Sigmoid colon (tissue), 7 donors: ENCODE measurements at regions of chr2 and their contacts with region 1.

Region 1: DNA sequence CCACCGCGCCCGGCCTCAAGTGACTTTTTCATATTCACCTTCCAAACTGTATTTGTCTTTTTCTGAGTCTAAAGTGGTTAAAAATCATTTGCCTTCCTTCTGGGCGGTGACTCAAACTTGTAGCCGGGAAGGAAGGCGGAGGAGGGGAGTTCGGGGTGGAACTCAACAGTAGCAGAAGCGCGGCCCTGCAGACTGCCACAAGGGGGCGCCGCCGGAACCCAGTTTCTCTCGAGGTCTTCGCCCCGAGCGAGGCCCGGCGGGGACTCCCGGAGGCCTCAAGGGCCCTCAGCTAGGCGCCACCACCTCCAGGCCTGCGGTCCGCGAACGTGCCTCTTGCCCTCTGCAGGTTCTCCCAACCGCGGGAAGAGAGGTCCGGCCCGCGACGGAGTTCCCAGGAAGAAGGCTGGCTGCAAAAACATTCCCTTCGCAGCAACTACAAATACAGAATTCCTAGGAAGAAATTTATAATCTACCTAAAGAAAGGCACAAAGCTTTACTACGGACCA is 16.8 kb upstream of the ITM2C start:
- DNase-seq: peak; percentile 92
- H3K4me3 ChIP-seq: no peak overlapping the region
- H3K27ac ChIP-seq: no peak overlapping the region
- H3K4me1 ChIP-seq: peaks cover 0 to 9% (median 4%) of the 10 kb centered on the region in 4 donors
- H3K27me3 ChIP-seq: no peaks in the 10 kb centered on the region
- CTCF ChIP-seq: peak; percentile 75 to 94 (median 91)
- EP300 ChIP-seq: no peak
- POLR2A ChIP-seq: no peak

Region 2: GRCh38 chr2:230505162-230505561 is 342.8 kb before region 1 on chr2:
- intact Hi-C with region 1: no loop called
- DNase-seq: no peak
- H3K4me3 ChIP-seq: no peak overlapping the region
- H3K27ac ChIP-seq: no peak overlapping the region
- H3K4me1 ChIP-seq: no peaks in the 10 kb centered on the region
- H3K27me3 ChIP-seq: no peaks in the 10 kb centered on the region
- CTCF ChIP-seq: no peak
- EP300 ChIP-seq: no peak
- POLR2A ChIP-seq: no peak

Region 3: GRCh38 chr2:230784795-230785194 is 63.1 kb before region 1 on chr2:
- intact Hi-C with region 1: no loop called
- DNase-seq: no peak
- H3K4me3 ChIP-seq: no peak overlapping the region
- H3K27ac ChIP-seq: peak overlapping the region in 3 of 4 donors; percentile 49 to 50 (median 50)
- H3K4me1 ChIP-seq: peaks cover 0 to 28% (median 15%) of the 10 kb centered on the region in 4 donors
- H3K27me3 ChIP-seq: no peaks in the 10 kb centered on the region
- CTCF ChIP-seq: no peak
- EP300 ChIP-seq: no peak
- POLR2A ChIP-seq: no peak

Region 4: DNA sequence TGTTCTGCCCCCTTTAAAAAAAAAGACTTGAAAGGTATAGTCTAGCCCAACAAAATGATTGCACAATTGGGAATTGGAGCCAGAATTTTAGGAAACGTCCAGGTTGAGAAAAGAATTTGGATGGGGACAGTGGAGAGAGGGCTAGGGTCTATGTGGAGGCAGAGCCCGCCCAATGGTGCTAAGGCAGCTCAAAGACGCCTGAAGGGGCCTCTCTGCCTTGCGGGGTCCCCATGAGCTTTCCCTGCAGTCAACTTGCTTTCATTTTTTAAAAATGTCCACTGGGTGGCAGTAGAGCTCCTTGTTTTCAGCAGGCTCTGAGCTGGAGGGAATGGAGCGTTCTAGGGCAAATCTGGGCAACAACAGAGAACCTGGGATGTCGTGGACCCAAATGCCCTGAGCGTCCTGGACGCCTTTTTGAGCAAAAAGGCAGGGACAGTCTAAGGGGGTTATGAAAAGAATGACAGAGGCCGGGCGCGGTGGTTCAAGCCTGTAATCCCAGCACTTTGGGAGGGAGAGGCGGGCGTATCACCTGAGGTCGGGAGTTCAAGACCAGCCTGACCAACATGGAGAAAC is 23.4 kb before region 1 on chr2:
- intact Hi-C with region 1: loop called (anchors 2 kb)
- DNase-seq: no peak
- H3K4me3 ChIP-seq: peak overlapping the region in 3 of 4 donors; percentile 14 to 34 (median 20)
- H3K27ac ChIP-seq: no peak overlapping the region
- H3K4me1 ChIP-seq: peaks cover 0 to 17% (median 12%) of the 10 kb centered on the region in 4 donors
- H3K27me3 ChIP-seq: peaks cover 5 to 35% (median 25%) of the 10 kb centered on the region in 3 donors
- CTCF ChIP-seq: peak in 3 of 4 experiments; percentile 64 to 73 (median 68)
- EP300 ChIP-seq: no peak
- POLR2A ChIP-seq: no peak

Region 5: GRCh38 chr2:230864598-230865306 is 16.8 kb after region 1 on chr2 and contains the start of gene ITM2C:
- intact Hi-C with region 1: loop called (anchors 2 kb)
- DNase-seq: peak; percentile 84
- H3K4me3 ChIP-seq: peak within 1 kb of the TSS; percentile 66 to 84 (median 78)
- H3K27ac ChIP-seq: peak within 1 kb of the TSS; percentile 71 to 88 (median 82)
- H3K4me1 ChIP-seq: peaks cover 0 to 51% (median 47%) of the 10 kb centered on the region in 4 donors
- H3K27me3 ChIP-seq: no peaks in the 10 kb centered on the region
- CTCF ChIP-seq: peak in 1 of 4 experiments; percentile 35
- EP300 ChIP-seq: no peak
- POLR2A ChIP-seq: peak; percentile 61 to 67
- total RNA-seq, gene ITM2C: 107 to 206 (median 117) TPM

Region 6: DNA sequence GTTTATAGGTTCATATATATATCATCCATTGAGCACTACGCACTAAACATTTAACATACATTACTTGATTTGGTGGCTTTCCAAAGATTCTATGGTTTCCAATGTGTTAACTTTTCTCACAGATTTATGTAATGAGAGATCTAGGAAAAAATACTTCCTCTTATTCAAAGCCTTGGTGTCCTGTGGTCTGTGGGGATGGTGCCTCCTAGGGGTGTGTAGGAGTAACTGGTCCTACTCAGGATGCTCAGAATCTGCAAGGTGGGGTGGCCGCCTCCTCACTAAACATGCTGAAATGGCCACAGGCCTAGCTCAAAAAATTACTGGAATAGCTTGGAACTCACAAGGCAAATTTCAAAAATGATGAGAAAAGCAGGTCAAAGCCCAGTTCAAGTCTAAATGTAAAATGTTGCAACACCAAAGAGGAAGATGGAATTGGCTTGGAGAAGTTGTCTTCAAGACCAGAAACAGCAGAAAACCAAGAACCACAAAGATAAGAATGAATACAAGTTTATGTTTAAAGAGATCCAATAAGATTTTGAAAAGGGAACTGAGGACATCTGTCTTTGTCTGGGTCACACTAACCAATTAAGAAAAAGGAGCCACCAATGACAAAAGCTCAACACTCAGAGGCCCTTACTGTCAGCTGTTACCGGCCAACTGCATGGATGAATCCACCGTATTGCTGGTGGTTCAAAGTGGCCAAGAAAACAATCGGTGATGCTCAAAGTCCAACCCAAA is 65.6 kb after region 1 on chr2:
- intact Hi-C with region 1: loop called (anchors 2 kb)
- DNase-seq: peak; percentile 77
- H3K4me3 ChIP-seq: no peak overlapping the region
- H3K27ac ChIP-seq: no peak overlapping the region
- H3K4me1 ChIP-seq: no peaks in the 10 kb centered on the region
- H3K27me3 ChIP-seq: no peaks in the 10 kb centered on the region
- CTCF ChIP-seq: peak in 3 of 4 experiments; percentile 46 to 63 (median 61)
- EP300 ChIP-seq: no peak
- POLR2A ChIP-seq: no peak

Region 7: GRCh38 chr2:231000211-231000904 is 152.4 kb after region 1 on chr2:
- intact Hi-C with region 1: no loop called
- DNase-seq: peak; percentile 57
- H3K4me3 ChIP-seq: no peak overlapping the region
- H3K27ac ChIP-seq: no peak overlapping the region
- H3K4me1 ChIP-seq: no peaks in the 10 kb centered on the region
- H3K27me3 ChIP-seq: peaks cover 0 to 28% (median 16%) of the 10 kb centered on the region in 3 donors
- CTCF ChIP-seq: no peak
- EP300 ChIP-seq: no peak
- POLR2A ChIP-seq: no peak